Activated B cell treated with CpG ODN at 0.5 μM for 24 hours (primary cell): ENCODE measurements at regions of chr22 and their contacts with region 1.

Region 1: DNA sequence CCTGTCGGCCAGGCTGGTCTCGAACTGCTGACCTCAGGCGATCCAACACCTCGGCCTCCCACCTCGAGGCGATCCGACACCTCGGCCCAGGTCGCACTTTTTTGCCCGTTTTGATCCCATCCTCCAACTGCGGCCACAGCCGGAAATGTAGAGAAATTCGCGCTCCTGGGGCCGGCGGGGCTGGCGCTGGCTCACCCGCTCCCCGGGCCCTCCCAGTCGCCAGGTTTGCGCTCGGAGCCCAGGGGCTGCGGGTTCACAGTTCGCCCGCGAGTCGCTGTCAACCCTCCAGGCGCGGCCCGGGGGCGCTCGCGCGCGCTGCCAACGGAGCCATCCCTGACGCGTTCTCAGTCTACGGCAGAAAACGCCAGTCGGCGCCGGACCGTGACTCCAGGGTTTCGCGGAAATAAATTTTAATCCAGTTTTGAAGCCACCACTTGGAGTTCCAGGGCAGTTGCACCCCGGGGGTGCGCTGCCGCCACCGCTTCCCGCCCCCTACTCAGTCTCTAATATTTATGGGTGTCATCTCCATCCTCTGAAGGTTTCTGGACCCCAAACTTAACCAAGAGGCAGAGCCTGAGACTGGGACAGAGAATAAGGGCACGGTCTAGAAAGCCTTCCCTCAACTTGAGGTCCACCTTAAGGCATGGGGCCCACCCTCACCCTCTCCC is 1.5 kb upstream of the KLHDC7B start:
- DNase-seq: peak; percentile 80
- ATAC-seq: peak; percentile 38
- H3K4me3 Mint-ChIP-seq: peak overlapping the region; percentile 60
- H3K27ac Mint-ChIP-seq: peak overlapping the region; percentile 82
- H3K4me1 Mint-ChIP-seq: peaks cover 56% of the 10 kb centered on the region
- H3K27me3 Mint-ChIP-seq: no peaks in the 10 kb centered on the region
- CTCF ChIP-seq: no peak

Region 2: DNA sequence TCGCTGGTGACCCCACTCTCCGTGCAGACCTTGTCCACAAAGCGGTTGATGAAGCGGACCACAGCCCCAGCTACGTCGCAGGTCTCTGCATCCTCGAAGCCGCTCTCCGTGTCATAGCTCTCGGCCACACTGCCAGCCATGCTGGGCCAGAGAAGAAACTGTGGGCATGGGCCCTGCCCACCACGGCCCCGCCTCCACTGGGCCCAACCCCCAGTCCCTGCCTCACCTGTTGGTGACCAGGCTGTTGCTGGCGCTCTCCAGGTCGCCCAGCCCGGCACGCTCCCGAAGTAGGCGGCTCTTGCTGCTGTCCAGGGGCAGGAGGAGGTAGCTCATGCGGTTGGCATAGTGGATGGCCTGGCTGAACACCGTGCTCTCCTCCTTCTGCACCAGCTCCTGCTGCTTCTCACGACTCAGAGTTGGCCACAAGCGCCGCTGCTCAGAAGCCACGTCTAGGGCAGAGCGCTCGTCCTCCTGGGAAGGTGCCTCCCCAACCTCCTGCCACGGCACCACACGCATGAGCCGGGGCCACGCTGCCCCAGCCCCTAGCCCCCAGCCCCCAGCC is 82.2 kb before region 1 on chr22:
- CTCF ChIA-PET with region 1: no interaction called
- POLR2A ChIA-PET with region 1: no interaction called
- intact Hi-C with region 1: no loop called
- DNase-seq: no peak
- ATAC-seq: no peak
- H3K4me3 Mint-ChIP-seq: no peak overlapping the region
- H3K27ac Mint-ChIP-seq: no peak overlapping the region
- H3K4me1 Mint-ChIP-seq: peaks cover 4% of the 10 kb centered on the region
- H3K27me3 Mint-ChIP-seq: no peaks in the 10 kb centered on the region
- CTCF ChIP-seq: no peak

Region 3: GRCh38 chr22:50525390-50526068 is 18.7 kb before region 1 on chr22 and contains the start of gene SCO2:
- CTCF ChIA-PET with region 1: interaction called, 46 read pairs
- POLR2A ChIA-PET with region 1: interaction called, 946 read pairs
- intact Hi-C with region 1: loop called (anchors 1 kb)
- DNase-seq: peak; percentile 97
- ATAC-seq: peak; percentile 52
- H3K4me3 Mint-ChIP-seq: peak within 1 kb of the TSS; percentile 84
- H3K27ac Mint-ChIP-seq: peak within 1 kb of the TSS; percentile 90
- H3K4me1 Mint-ChIP-seq: peaks cover 33% of the 10 kb centered on the region
- H3K27me3 Mint-ChIP-seq: no peaks in the 10 kb centered on the region
- CTCF ChIP-seq: no peak
- total RNA-seq, gene SCO2: 7.1 and 11.6 TPM in 2 replicates

Region 4: GRCh38 chr22:50530877-50531545 is 13.2 kb before region 1 on chr22:
- CTCF ChIA-PET with region 1: interaction called, 46 read pairs
- POLR2A ChIA-PET with region 1: interaction called, 946 read pairs
- intact Hi-C with region 1: loop called (anchors 1 kb)
- DNase-seq: peak; percentile 86
- ATAC-seq: peak; percentile 53
- H3K4me3 Mint-ChIP-seq: peak overlapping the region; percentile 92
- H3K27ac Mint-ChIP-seq: peak overlapping the region; percentile 99
- H3K4me1 Mint-ChIP-seq: peaks cover 55% of the 10 kb centered on the region
- H3K27me3 Mint-ChIP-seq: no peaks in the 10 kb centered on the region
- CTCF ChIP-seq: no peak

Region 5: GRCh38 chr22:50606165-50606945 is 62.1 kb after region 1 on chr22:
- CTCF ChIA-PET with region 1: no interaction called
- POLR2A ChIA-PET with region 1: no interaction called
- intact Hi-C with region 1: no loop called
- DNase-seq: no peak
- ATAC-seq: no peak
- H3K4me3 Mint-ChIP-seq: no peak overlapping the region
- H3K27ac Mint-ChIP-seq: no peak overlapping the region
- H3K4me1 Mint-ChIP-seq: peaks cover 7% of the 10 kb centered on the region
- H3K27me3 Mint-ChIP-seq: peaks cover 55% of the 10 kb centered on the region
- CTCF ChIP-seq: no peak